ENCODE measurements at regions of chr12 and their contacts with region 1.

Region 1: DNA sequence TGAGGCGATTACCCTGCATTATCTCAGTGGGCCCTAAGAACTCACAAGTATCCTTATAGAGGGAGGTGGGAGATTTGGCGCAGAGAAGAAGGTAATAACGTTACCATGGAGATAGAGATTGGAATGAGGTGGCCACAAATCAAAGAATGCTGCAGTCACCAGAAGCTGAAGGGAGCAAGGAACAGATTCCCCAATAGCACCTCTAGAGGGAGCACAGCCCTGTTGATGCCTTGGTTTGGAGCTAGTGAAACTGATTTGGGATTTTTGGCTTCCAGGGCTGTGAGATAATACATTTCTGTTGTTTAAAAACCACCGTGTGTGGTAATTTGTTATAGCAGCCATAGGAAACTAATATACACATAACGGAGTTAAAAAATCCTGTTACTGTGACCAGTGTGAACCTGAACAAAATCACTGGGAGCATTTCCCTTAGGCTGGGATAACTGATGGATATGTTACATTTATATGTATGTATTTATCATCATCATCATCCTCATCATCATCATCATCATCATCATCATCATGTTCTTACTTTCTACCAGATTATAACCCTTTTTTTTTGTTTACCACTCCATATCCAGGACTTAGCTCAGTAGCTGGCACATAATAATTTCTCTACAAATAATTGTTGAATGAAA is 100.3 kb downstream of the LIN7A start:
- DNase-seq: peak in 1 of 2 experiments; percentile 34
- H3K4me3 ChIP-seq: no peak overlapping the region
- H3K27ac ChIP-seq: no peak overlapping the region
- H3K4me1 ChIP-seq: no peaks in the 10 kb centered on the region; a peak in 1 of 7 replicates
- H3K27me3 ChIP-seq: no peaks in the 10 kb centered on the region
- CTCF ChIP-seq: peak; percentile 45 to 89 (median 74)
- EP300 ChIP-seq: no peak
- POLR2A ChIP-seq: no peak
- RAD21 ChIP-seq: peak; percentile 75 to 84

Region 2: GRCh38 chr12:80825506-80825905 is 12.0 kb before region 1 on chr12:
- CTCF ChIA-PET with region 1: interaction called, 23 read pairs
- POLR2A ChIA-PET with region 1: no interaction called
- DNase-seq: no peak
- H3K4me3 ChIP-seq: no peak overlapping the region
- H3K27ac ChIP-seq: no peak overlapping the region
- H3K4me1 ChIP-seq: peaks cover 5 to 13% (median 9%) of the 10 kb centered on the region in 4 experiments
- H3K27me3 ChIP-seq: no peaks in the 10 kb centered on the region
- CTCF ChIP-seq: no peak
- EP300 ChIP-seq: no peak
- POLR2A ChIP-seq: no peak
- RAD21 ChIP-seq: no peak

Region 3: DNA sequence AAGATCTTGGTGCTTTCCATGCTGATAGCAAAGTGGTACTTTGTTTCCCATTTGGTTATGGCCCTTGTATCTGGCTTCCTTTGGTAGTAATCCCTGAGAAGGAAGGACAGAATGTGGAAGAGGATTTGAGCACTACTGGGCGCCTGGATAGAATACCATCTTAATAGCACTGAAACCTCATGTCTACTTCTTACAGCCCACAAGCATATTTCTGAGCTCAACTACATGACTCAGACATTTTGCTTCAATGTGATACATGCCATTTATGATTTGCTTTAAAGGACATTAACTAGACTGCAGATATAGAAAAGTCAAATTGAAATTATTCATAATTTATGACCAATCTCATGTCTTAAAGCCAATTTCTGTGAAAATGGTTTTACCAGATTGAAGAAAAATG is 19.8 kb after region 1 on chr12:
- CTCF ChIA-PET with region 1: interaction called, 13 read pairs
- POLR2A ChIA-PET with region 1: no interaction called
- DNase-seq: no peak
- H3K4me3 ChIP-seq: no peak overlapping the region
- H3K27ac ChIP-seq: no peak overlapping the region
- H3K4me1 ChIP-seq: no peaks in the 10 kb centered on the region
- H3K27me3 ChIP-seq: no peaks in the 10 kb centered on the region
- CTCF ChIP-seq: no peak
- EP300 ChIP-seq: no peak
- POLR2A ChIP-seq: no peak
- RAD21 ChIP-seq: no peak

Region 4: GRCh38 chr12:81257947-81258551 is 420.6 kb after region 1 on chr12:
- CTCF ChIA-PET with region 1: interaction called, 12 read pairs
- POLR2A ChIA-PET with region 1: no interaction called
- DNase-seq: no peak
- H3K4me3 ChIP-seq: no peak overlapping the region
- H3K27ac ChIP-seq: no peak overlapping the region
- H3K4me1 ChIP-seq: peaks cover 0 to 6% (median 4%) of the 10 kb centered on the region in 4 experiments; a peak in 4 of 7 replicates
- H3K27me3 ChIP-seq: no peaks in the 10 kb centered on the region
- CTCF ChIP-seq: peak in 2 of 3 experiments; percentile 27 to 48; a peak in 2 of 4 replicates
- EP300 ChIP-seq: no peak
- POLR2A ChIP-seq: no peak
- RAD21 ChIP-seq: peak; percentile 79 to 81